ENCODE measurements at regions of chr14 and their contacts with region 1.

Region 1: DNA sequence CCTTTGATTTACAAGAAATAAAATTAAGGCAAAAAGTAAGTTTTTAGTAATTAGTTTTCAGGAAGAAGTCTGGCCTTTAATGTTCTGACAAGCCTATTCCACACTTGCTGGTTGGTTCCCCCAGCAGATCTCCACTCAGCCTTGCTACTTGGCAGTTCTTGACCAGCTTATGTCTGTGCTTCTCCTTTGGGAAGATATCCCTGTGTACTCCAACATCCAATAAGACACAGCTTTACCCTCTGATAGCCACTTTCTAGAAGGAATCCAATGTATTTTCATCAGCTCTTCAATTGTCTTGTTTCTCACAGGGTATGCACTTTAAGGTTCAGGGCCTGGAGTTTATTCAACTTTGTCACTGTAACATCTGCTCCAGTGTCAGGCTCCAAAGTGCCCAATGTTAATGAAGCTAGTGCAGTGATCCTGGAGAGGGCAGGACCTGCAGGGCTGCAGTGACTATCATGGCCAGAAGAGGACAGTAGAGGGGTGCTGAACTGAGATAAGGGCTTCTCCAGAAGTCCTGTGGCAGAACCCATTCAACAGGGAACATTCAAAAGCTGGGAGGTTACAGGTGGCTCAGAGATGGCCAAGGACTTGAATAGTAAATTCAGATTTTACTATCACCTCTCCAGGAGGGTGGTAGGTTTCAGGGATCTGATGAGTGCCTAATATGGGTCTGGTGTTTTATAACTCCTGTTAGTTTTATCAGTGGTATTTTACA is 22.9 kb downstream of the JKAMP start:
- DNase-seq: peak; percentile 41
- H3K27ac ChIP-seq: no peak overlapping the region
- CTCF ChIP-seq: peak; percentile 84

Region 2: GRCh38 chr14:59428581-59429012 is 78.6 kb before region 1 on chr14:
- CTCF ChIA-PET with region 1: no interaction called
- POLR2A ChIA-PET with region 1: no interaction called
- DNase-seq: peak; percentile 18
- H3K27ac ChIP-seq: no peak overlapping the region
- CTCF ChIP-seq: no peak

Region 3: GRCh38 chr14:59576332-59577294 is 69.4 kb after region 1 on chr14 and contains the start of gene CCDC175:
- CTCF ChIA-PET with region 1: interaction called, 11 read pairs
- POLR2A ChIA-PET with region 1: no interaction called
- DNase-seq: peak; percentile 54
- H3K27ac ChIP-seq: no peak within 1 kb of the TSS
- CTCF ChIP-seq: peak; percentile 78

Region 4: DNA sequence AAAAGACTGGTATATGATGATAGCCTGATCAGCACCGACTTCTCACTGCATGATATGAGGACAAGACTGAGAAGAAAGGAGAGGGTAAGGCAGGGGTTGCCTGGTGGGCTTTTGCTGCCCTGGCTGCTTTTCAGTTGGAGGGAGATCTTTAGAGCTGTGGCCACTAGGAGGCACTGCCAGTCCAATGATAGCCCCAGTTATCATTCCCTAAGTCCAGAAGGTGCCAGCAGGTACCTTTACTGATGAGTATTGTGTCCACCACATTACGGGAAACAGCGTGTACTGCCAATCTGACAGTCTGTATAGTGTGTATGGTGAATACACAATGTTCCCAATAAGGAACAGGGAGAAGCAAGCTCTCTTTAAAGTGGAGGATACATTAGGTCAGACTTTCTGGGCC is 125.2 kb after region 1 on chr14:
- CTCF ChIA-PET with region 1: no interaction called
- POLR2A ChIA-PET with region 1: no interaction called
- DNase-seq: peak; percentile 12
- H3K27ac ChIP-seq: no peak overlapping the region
- CTCF ChIP-seq: no peak; the same call in 1 of the 2 replicates